ENCODE measurements at regions of chr16 and their contacts with region 1.

Region 1: GRCh38 chr16:75486676-75487313 is 8.4 kb downstream of the CHST6 start:
- DNase-seq: no peak
- H3K4me3 ChIP-seq: no peak overlapping the region
- H3K27ac ChIP-seq: no peak overlapping the region
- H3K4me1 ChIP-seq: no peaks in the 10 kb centered on the region
- H3K27me3 ChIP-seq: peaks cover 2% of the 10 kb centered on the region
- CTCF ChIP-seq: no peak

Region 2: DNA sequence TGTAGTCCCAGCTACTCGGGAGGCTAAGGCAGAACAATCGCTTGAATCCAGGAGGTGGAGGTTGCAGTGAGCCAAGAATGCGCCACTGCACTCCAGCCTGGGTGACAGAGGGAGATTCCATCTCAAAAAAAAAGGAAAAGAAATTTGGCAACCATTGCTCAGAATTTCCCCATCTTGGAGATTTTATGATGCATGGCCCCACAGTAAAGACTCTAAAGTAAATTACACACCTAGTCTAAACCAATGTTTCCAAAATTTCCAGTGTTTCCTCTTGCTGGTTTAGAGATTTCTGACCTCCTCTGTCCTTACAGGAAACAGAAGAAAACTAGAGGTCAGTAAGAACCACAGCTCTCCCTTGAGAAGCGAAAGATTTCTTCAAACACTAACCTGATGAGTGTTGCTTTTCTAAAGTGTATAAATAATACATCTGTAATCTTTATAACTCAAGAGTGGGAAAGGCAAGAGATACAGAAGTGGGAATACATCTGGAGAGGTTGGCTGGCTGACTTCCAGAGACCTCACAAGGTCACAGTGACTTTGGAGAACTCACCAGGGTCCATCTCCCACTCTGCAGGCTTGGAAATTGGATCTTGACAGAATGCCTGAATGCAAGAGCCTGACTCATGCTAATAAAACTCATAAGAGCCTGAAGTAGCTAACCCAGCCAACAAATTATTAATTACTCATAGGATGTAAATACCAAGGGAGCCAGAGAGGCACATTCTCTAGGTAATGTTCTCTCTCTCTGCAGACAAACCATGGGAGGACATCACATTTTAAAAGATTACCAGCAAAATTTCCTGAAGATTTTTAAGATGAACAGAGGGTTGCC is 127.5 kb after region 1 on chr16:
- intact Hi-C with region 1: loop called (anchors 10 kb)
- DNase-seq: no peak
- H3K4me3 ChIP-seq: no peak overlapping the region
- H3K27ac ChIP-seq: no peak overlapping the region
- H3K4me1 ChIP-seq: peaks cover 8% of the 10 kb centered on the region
- H3K27me3 ChIP-seq: no peaks in the 10 kb centered on the region
- CTCF ChIP-seq: no peak

Measured in left ventricle myocardium inferior (tissue), 1 donor.